ENCODE measurements at regions of chr1 and their contacts with region 1.

Region 1: DNA sequence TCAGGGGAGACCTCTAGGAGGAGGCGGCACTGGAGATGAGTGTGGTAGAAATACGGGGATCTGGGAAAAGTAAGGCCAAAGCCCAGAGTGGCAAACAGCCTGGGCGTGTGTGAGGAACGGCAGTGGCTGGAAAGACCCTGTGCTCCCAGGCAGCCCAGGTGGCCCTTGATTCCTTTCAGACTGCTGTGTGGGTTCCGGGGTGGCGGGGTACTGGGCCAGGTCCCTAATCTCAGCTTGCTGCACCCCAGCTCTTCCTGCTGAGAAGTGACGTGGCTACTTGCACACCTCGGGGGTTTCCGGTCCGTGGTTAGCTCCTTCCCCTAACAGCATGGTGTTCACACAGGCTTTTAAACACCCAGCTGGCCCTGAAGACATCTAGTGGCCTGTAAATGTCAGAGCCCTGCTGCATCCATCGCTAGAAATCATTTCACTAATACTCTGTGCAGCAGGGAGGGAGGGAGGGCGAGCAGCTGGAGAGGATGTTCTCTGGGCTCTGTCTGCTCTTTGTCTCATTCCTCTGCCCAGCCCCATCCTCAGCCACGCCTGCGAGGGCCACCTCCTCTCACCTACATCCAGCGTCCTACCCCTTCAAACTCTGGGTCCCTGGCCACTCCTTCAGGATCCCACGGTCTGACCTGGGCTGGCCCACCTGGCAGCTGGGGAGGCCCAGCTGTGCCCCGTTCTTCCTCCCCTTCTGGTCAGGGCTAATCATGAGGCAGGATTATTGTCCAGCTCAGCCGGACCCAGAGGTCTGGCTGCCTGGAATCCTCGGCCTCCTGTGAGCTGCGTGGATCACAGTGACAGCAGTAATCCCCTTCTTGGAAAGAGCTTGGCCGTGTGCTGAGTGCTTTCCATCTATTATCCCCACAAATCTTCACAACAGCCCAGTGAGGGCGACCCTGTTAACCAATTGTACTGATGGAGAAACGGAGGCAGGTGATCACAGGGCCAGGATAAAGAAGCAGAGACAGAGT is 7.2 kb downstream of the ZDHHC18 start:
- DNase-seq: peak; percentile 85
- H3K4me3 ChIP-seq: no peak overlapping the region
- H3K27ac ChIP-seq: peak overlapping the region; percentile 57
- H3K4me1 ChIP-seq: peaks cover 23% of the 10 kb centered on the region
- CTCF ChIP-seq: peak; percentile 52

Region 2: GRCh38 chr1:26754086-26754874 is 79.4 kb before region 1 on chr1:
- CTCF ChIA-PET with region 1: no interaction called
- POLR2A ChIA-PET with region 1: no interaction called
- intact Hi-C with region 1: no loop called
- DNase-seq: no peak
- H3K4me3 ChIP-seq: no peak overlapping the region
- H3K27ac ChIP-seq: no peak overlapping the region
- H3K4me1 ChIP-seq: no peaks in the 10 kb centered on the region
- CTCF ChIP-seq: no peak

Region 3: GRCh38 chr1:26811057-26811456 is 22.7 kb before region 1 on chr1:
- CTCF ChIA-PET with region 1: no interaction called
- POLR2A ChIA-PET with region 1: interaction called, 4 read pairs
- intact Hi-C with region 1: loop called (anchors 2 kb)
- DNase-seq: no peak
- H3K4me3 ChIP-seq: no peak overlapping the region
- H3K27ac ChIP-seq: no peak overlapping the region
- H3K4me1 ChIP-seq: no peaks in the 10 kb centered on the region
- CTCF ChIP-seq: no peak